CD14-positive monocyte (primary cell): ENCODE measurements at regions of chr19 and their contacts with region 1.

Region 1: DNA sequence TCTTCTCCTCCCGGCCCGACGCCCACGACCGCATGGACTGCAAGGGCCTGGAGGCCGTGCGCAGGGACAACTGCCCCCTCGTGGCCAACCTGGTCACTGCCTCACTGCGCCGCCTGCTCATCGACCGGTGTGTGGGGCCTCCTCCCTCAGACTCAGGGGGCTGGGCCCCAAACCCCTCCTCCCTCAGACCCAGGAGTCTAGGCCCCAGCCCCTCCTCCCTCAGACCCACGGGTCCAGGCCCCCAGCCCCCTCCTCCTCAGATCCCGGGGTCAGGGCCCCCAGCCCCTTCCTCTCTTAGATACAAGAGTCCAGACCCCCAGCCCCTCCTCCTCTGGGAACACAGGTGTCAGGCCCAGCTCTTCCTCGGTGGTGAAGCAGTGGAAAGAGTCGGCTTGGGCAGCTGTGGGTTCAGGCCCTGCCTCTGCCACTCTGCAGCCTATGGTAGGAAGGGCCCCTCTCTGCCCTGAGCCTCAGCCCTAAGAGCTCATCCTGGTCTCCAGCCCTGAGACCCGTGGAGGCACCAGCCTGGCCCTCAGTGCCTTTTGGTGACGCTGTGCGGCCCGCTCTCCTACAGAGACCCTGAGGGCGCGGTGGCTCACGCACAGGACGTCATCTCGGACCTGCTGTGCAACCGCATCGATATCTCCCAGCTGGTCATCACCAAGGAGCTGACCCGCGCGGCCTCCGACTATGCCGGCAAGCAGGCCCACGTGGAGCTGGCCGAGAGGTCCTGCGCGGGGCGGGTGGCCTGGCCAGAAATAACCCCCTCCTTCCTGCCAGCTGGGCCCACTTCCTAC is 3.7 kb upstream of the SPIB start:
- DNase-seq: peak; percentile 72 to 76 (median 74)
- H3K4me3 ChIP-seq: peak overlapping the region in 2 of 3 experiments; percentile 11 to 53
- H3K4me3 Mint-ChIP-seq: peak overlapping the region; percentile 55 to 63
- H3K27ac ChIP-seq: peak overlapping the region; percentile 65 to 73
- H3K27ac Mint-ChIP-seq: peak overlapping the region; percentile 69 to 93 (median 86)
- H3K4me1 ChIP-seq: peaks cover 41 to 51% of the 10 kb centered on the region in 2 donors
- H3K4me1 Mint-ChIP-seq: peaks cover 32% of the 10 kb centered on the region
- H3K27me3 ChIP-seq: peaks cover 5 to 19% of the 10 kb centered on the region in 2 donors
- H3K27me3 Mint-ChIP-seq: peaks cover 16 to 22% (median 19%) of the 10 kb centered on the region in 3 donors
- CTCF ChIP-seq: peak; percentile 95

Region 2: DNA sequence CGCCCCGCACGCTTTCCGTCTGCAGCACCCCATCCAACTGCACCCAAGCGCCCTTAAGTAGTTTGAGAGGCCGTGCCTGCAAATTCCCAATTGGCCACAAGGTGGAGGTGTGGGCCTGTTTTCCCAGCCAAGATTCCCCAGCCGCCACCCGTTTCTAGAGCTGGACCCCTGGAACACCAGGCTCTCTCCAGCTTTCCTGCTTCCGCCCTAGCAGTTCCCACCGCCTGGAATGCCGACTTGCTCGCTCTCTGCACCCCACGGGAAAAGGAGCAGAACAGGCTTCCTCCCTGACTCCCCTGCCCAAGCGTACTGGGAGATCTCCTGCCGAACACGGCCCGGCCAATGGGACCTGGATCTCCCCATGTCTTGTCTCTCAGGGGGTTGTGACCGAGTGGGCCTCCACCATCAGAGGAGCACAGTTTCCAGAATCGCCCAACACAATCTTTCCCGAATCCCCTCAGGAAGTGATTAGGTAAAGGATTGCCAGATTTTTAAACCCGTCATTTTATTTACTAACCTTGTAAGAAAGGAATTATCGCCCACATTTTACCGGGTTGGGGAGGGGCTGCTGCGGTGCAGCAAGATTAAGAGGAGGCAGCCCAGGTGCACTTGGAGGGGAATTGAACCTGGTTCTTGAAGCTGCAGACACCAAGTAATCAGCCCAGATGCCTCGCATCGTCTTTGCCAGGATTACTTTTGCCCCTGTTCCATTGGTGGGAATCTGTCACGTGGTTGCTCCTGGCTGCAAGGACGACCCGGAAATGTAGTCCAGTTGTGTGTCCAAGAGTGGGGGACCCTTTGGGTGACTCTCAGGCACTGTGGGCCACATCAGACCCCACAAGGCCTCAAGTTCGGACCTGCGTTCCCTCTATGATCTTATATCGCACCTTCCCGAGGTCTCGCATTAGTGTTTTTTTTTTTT is 46.2 kb before region 1 on chr19:
- intact Hi-C with region 1: loop called (anchors 2 to 5 kb)
- DNase-seq: peak; percentile 70 to 87 (median 87)
- H3K4me3 ChIP-seq: peak overlapping the region; percentile 53 to 90 (median 67)
- H3K4me3 Mint-ChIP-seq: peak overlapping the region; percentile 96 to 99
- H3K27ac ChIP-seq: peak overlapping the region; percentile 6 to 79
- H3K27ac Mint-ChIP-seq: peak overlapping the region; percentile 77 to 98 (median 91)
- H3K4me1 ChIP-seq: peaks cover 26 to 29% of the 10 kb centered on the region in 2 donors
- H3K4me1 Mint-ChIP-seq: peaks cover 29% of the 10 kb centered on the region
- H3K27me3 ChIP-seq: no peaks in the 10 kb centered on the region
- H3K27me3 Mint-ChIP-seq: peaks cover 0 to 8% (median 2%) of the 10 kb centered on the region in 3 donors
- CTCF ChIP-seq: peak; percentile 93

Region 3: DNA sequence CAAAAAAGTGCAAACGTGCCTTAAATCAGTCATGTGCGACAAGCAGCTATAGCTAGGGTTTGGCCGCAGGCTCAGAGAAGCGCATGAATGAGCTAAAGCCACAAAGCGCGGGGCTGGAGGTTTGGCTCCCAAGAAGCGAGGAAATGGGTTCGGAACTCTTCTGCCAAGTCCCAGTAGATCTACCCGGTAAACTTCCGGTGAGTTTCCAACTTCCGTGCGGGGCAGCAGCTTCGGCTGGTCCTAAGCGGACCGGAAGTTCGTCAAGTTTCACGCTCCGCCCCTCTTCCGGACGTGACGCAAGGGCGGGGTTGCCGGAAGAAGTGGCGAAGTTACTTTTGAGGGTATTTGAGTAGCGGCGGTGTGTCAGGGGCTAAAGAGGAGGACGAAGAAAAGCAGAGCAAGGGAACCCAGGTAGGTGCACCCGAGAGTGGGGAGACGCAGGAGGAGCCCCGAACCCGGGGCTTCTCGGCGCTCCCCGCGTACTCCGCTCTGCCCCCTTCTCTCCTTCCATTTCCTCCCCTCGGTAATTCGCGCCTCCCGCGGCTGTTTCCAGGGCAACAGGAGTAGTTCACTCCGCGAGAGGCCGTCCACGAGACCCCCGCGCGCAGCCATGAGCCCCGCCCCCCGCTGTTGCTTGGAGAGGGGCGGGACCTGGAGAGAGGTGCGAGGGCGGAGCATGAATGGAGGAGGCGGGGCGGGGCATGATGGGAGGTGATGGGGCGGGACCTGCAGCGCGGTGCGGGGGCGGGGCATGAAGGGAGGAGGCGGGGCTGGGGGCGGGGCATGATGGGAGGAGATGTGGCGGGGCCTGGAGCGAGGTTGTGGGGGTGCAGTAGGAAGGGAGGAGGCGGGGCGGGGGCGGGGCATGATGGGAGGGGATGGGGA is 38.7 kb before region 1 on chr19 and contains the start of gene NR1H2:
- intact Hi-C with region 1: loop called in 1 of 2 experiments (anchors 5 kb)
- DNase-seq: peak; percentile 97 to 99 (median 98)
- H3K4me3 ChIP-seq: peak within 1 kb of the TSS; percentile 88 to 97 (median 93)
- H3K4me3 Mint-ChIP-seq: peak within 1 kb of the TSS; percentile 89 to 98
- H3K27ac ChIP-seq: peak within 1 kb of the TSS; percentile 97 to 99
- H3K27ac Mint-ChIP-seq: peak within 1 kb of the TSS; percentile 95 to 100 (median 100)
- H3K4me1 ChIP-seq: peaks cover 23 to 26% of the 10 kb centered on the region in 2 donors
- H3K4me1 Mint-ChIP-seq: peaks cover 21% of the 10 kb centered on the region
- H3K27me3 ChIP-seq: no peaks in the 10 kb centered on the region
- H3K27me3 Mint-ChIP-seq: peaks cover 1 to 2% (median 2%) of the 10 kb centered on the region in 3 donors
- CTCF ChIP-seq: no peak
- polyA plus RNA-seq, gene NR1H2: 77.1 to 111 (median 78.9) TPM

Region 4: GRCh38 chr19:50447750-50448149 is 32.7 kb after region 1 on chr19:
- intact Hi-C with region 1: no loop called
- DNase-seq: no peak
- H3K4me3 ChIP-seq: no peak overlapping the region
- H3K4me3 Mint-ChIP-seq: no peak overlapping the region
- H3K27ac ChIP-seq: no peak overlapping the region
- H3K27ac Mint-ChIP-seq: no peak overlapping the region
- H3K4me1 ChIP-seq: no peaks in the 10 kb centered on the region
- H3K4me1 Mint-ChIP-seq: no peaks in the 10 kb centered on the region
- H3K27me3 ChIP-seq: peaks cover 0 to 2% of the 10 kb centered on the region in 2 donors
- H3K27me3 Mint-ChIP-seq: peaks cover 4 to 12% (median 10%) of the 10 kb centered on the region in 3 donors
- CTCF ChIP-seq: no peak

Region 5: DNA sequence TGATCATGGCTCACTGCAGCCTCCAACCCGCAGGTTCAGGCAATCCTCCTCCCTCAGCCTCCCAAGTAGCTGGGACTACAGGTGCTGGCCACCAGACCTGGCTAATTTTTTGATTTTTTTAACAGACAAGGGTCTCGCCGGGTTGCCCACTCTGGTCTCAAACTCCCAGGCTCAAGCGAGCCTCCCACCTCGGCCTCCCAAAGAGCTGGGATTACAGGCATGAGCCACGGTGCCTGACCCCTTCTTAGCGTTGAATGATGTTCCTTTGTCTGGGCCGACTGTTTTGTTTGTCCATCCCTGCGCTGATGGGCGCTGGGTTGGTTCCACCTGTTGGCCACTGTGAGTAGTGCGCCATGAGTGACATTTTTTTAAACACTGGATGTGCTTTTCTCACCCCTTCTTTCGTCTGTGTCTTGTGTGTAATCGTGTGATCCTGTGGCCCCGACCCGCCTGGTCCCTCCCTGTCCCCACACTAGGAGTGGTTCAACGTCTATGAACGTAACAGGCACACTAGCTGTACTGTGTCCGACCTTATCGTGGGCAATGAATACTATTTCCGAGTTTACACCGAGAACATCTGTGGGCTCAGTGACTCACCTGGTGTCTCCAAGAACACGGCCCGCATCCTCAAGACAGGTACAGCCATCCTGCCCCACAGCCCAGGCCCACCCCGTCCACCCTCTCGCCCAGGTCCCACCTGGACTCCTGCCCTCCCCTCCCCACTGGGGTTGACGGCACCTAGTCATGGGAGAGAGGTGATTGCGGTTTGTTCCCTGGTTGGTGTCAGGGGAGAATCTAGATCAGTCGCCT is 46.2 kb after region 1 on chr19:
- intact Hi-C with region 1: loop called in 1 of 2 experiments (anchors 2 kb)
- DNase-seq: peak; percentile 64 to 70 (median 67)
- H3K4me3 ChIP-seq: no peak overlapping the region
- H3K4me3 Mint-ChIP-seq: no peak overlapping the region
- H3K27ac ChIP-seq: no peak overlapping the region
- H3K27ac Mint-ChIP-seq: peak overlapping the region in 1 of 7 donors; percentile 10
- H3K4me1 ChIP-seq: no peaks in the 10 kb centered on the region
- H3K4me1 Mint-ChIP-seq: peaks cover 5% of the 10 kb centered on the region
- H3K27me3 ChIP-seq: peaks cover 0 to 7% of the 10 kb centered on the region in 2 donors
- H3K27me3 Mint-ChIP-seq: peaks cover 14 to 44% (median 19%) of the 10 kb centered on the region in 3 donors
- CTCF ChIP-seq: peak; percentile 82